ENCODE measurements at regions of chr7 and their contacts with region 1.

Region 1: DNA sequence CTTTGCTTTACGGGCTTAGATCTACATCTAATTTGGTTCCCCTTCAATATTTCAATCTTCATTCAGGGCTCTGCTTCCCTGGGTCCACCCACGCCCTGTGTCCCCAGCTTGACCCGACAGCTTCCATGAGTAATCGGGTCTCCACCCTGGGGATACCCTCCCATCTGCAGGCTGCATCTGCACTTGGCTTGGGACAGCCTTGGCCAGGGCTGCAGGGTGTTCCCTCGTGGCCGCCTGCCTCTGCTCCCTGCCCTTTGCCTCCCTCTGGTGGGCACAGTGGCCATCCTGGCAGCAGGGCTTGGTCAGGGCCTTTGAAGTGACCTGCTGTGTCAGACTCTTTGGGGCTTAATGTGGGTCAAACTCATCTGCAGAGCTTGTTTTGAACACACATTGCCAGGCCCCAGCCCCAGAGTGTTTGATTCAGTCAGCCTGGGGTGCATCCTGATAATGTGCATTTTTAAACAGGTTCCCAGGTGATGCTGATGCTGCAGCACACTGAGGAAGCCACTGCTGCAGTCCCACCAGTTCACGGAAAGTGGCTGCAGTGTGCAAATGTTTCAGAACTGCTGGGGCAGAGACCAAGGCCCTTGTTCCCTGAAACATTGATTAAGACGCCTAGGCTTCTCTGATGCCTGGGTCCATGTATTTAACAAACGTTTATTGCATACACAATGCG is 80.7 kb upstream of the SEC61G start:
- DNase-seq: peak; percentile 51
- ATAC-seq: peak; percentile 97
- H3K4me3 ChIP-seq: no peak overlapping the region
- H3K27ac ChIP-seq: no peak overlapping the region
- H3K4me1 ChIP-seq: peaks cover 6 to 32% of the 10 kb centered on the region in 2 experiments
- H3K27me3 ChIP-seq: no peaks in the 10 kb centered on the region
- CTCF ChIP-seq: peak; percentile 82 to 94 (median 92)
- POLR2A ChIP-seq: no peak
- RAD21 ChIP-seq: peak; percentile 97

Region 2: GRCh38 chr7:54788664-54789063 is 51.0 kb before region 1 on chr7:
- CTCF ChIA-PET with region 1: interaction called, 42 read pairs
- POLR2A ChIA-PET with region 1: no interaction called
- RAD21 ChIA-PET with region 1: interaction called, 3 to 4 read pairs
- intact Hi-C with region 1: loop called (anchors 1 kb)
- DNase-seq: peak; percentile 95
- ATAC-seq: peak; percentile 99
- H3K4me3 ChIP-seq: no peak overlapping the region
- H3K27ac ChIP-seq: no peak overlapping the region
- H3K4me1 ChIP-seq: peaks cover 2 to 18% of the 10 kb centered on the region in 2 experiments; a peak in 3 of 4 replicates
- H3K27me3 ChIP-seq: no peaks in the 10 kb centered on the region
- CTCF ChIP-seq: peak; percentile 65 to 90 (median 73)
- POLR2A ChIP-seq: no peak
- RAD21 ChIP-seq: peak; percentile 96

Region 3: DNA sequence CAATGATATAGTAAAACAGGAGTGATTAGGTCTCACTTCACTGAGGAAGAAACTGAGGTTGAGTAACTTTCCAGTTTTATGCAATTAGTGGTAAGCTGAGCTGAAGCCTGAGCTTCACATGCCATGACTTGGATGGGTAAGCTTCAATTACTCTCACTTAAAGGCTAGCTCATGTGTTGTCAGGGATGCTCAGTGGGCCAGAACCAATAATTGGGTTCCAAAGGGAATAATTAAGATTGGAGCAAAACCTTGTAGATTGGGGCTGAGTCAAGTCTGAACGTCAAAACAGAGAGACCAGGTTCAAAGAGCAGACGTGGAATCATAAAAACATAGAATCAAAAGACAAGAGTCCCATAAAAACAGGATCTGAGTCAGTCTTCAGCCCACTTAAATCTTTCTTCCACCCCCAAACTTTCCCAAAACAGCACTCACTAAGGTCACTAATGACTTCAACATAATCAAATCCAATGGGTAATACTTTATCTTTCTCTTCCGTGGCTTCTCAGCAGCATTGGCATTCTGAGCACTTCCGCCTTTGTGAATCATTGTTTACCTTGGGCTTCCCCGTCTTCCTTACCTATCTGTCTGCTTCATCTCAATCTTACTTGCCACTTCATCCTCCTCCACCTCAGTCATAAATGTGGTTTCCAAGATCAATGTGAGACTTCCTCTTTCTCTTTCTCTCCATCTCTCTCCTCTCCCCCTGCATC is 156.1 kb after region 1 on chr7:
- CTCF ChIA-PET with region 1: no interaction called
- POLR2A ChIA-PET with region 1: no interaction called
- RAD21 ChIA-PET with region 1: no interaction called
- intact Hi-C with region 1: loop called (anchors 5 kb)
- DNase-seq: peak; percentile 71
- ATAC-seq: peak; percentile 89
- H3K4me3 ChIP-seq: peak overlapping the region in 1 of 2 experiments; percentile 16; a peak in 2 of 4 replicates
- H3K27ac ChIP-seq: peak overlapping the region; percentile 11; the same call in 1 of the 2 replicates
- H3K4me1 ChIP-seq: peaks cover 18 to 28% of the 10 kb centered on the region in 2 experiments
- H3K27me3 ChIP-seq: no peaks in the 10 kb centered on the region
- CTCF ChIP-seq: no peak
- POLR2A ChIP-seq: no peak
- RAD21 ChIP-seq: peak; percentile 30

Region 4: GRCh38 chr7:55065079-55065478 is 225.4 kb after region 1 on chr7:
- CTCF ChIA-PET with region 1: interaction called, 5 read pairs
- POLR2A ChIA-PET with region 1: no interaction called
- RAD21 ChIA-PET with region 1: no interaction called
- intact Hi-C with region 1: loop called (anchors 5 kb)
- DNase-seq: peak; percentile 83
- ATAC-seq: peak; percentile 83
- H3K4me3 ChIP-seq: peak overlapping the region; percentile 8 to 43
- H3K27ac ChIP-seq: peak overlapping the region; percentile 70
- H3K4me1 ChIP-seq: peaks cover 33 to 80% of the 10 kb centered on the region in 2 experiments
- H3K27me3 ChIP-seq: no peaks in the 10 kb centered on the region
- CTCF ChIP-seq: no peak
- POLR2A ChIP-seq: no peak
- RAD21 ChIP-seq: no peak

Measured in HCT116 (cell line).